ENCODE measurements at regions of chr5 and their contacts with region 1.

Region 1: GRCh38 chr5:143066556-143067281 is 296.5 kb downstream of the ARHGAP26 start:
- DNase-seq: no peak
- H3K4me3 Mint-ChIP-seq: no peak overlapping the region
- H3K27ac Mint-ChIP-seq: peak overlapping the region; percentile 90
- H3K4me1 Mint-ChIP-seq: peaks cover 51% of the 10 kb centered on the region
- H3K27me3 Mint-ChIP-seq: no peaks in the 10 kb centered on the region

Region 2: DNA sequence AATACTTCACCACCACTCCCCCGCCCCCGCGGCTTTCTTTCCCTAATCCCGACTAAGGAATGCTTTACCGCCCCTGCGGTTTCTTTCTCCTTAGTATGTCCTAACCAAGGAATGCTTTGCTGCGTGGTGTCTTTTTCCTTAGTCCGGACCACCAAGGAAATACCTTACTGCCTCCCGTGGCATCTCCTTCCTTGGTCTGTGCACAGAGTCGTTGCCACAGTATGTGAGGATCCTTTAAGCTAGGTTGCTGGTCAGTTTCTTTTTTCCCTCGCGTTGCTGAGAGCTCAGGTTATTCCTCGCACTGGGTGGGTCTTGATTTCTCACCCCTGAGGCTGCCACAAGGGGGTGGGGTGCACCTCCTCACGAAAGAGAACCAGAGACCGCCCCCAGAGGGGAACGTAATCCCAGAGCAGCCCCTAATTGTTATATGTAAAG is 27.4 kb after region 1 on chr5:
- intact Hi-C with region 1: loop called (anchors 2 kb)
- DNase-seq: no peak
- H3K4me3 Mint-ChIP-seq: peak overlapping the region; percentile 9
- H3K27ac Mint-ChIP-seq: peak overlapping the region; percentile 79
- H3K4me1 Mint-ChIP-seq: peaks cover 29% of the 10 kb centered on the region
- H3K27me3 Mint-ChIP-seq: no peaks in the 10 kb centered on the region

Region 3: DNA sequence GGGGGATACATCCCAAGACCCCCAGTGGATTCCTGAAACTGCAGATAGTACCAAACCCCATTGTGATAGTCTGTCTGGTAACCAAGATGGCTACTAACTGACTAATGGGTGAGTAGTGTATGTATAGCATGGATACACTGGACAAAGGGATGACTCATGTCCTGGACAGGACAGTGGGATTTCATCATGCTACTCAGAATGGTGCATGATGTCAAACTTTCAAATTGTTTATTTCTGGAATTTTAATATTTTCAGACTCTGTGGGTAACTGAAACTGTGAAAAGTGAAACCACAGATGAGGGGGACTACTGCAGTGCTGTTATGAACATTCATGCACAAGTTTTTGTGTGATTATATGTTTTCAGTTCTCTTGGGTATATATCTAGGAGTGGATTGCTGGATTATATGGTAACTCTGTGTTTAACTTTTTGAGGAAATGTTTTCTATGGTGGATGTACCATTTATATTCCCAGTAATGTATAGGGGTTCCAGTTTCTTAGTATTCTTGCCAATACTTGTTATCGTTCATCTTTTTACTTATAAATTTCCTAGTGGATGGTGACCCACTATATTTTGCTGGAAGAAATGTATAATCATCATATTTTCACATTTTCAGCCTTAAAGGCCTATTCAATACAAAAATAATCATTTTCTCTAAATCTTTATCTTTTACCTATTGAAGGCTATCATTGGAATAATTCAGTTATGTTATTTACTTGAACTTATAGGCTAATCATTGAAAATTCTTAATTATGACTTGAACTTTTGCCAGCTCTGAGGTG is 195.9 kb after region 1 on chr5:
- intact Hi-C with region 1: loop called (anchors 5 kb)
- DNase-seq: no peak
- H3K4me3 Mint-ChIP-seq: no peak overlapping the region
- H3K27ac Mint-ChIP-seq: no peak overlapping the region
- H3K4me1 Mint-ChIP-seq: peaks cover 25% of the 10 kb centered on the region
- H3K27me3 Mint-ChIP-seq: no peaks in the 10 kb centered on the region